ENCODE measurements at regions of chr10 and their contacts with region 1.

Region 1: GRCh38 chr10:70758757-70759514 is 26.2 kb downstream of the TBATA start:
- DNase-seq: peak; percentile 52
- ATAC-seq: peak; percentile 49
- H3K4me3 ChIP-seq: no peak overlapping the region
- H3K27ac ChIP-seq: no peak overlapping the region
- H3K4me1 ChIP-seq: peaks cover 6% of the 10 kb centered on the region; the same call in 1 of the 2 replicates
- H3K27me3 ChIP-seq: no peaks in the 10 kb centered on the region
- CTCF ChIP-seq: peak; percentile 81
- EP300 ChIP-seq: no peak
- POLR2A ChIP-seq: no peak
- RAD21 ChIP-seq: peak; percentile 50; the same call in 1 of the 2 replicates

Region 2: DNA sequence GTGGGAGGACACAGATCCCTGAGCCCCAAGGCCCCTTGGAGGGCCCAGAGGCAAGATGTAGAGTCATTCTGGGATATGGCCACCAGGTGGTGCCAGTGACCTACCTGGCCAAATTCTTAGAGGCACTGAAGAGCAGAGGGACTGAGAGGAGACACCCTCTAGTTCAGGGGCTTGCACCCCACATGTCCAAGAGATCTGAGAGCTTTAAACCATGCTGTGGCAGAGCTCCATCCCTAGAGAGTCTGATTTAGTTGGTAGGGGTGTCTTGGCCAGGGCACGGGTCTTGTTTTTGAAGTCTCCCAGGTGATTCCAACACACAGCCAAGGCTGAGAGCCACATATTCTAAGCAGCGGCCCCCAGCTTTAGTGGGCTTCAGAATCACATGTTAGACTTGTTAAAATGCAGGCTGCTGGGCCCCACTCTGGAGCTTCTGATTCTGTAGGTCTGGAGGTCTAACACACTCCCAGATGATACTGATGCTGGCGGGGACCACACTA is 208.9 kb before region 1 on chr10:
- CTCF ChIA-PET with region 1: interaction called, 27 read pairs
- POLR2A ChIA-PET with region 1: no interaction called
- in situ Hi-C with region 1: loop called (anchors 5 kb)
- intact Hi-C with region 1: loop called (anchors 1 kb)
- DNase-seq: peak; percentile 44
- ATAC-seq: peak; percentile 82
- H3K4me3 ChIP-seq: no peak overlapping the region
- H3K27ac ChIP-seq: no peak overlapping the region
- H3K4me1 ChIP-seq: peaks cover 21% of the 10 kb centered on the region
- H3K27me3 ChIP-seq: peaks cover 1 to 4% of the 10 kb centered on the region in 2 experiments; a peak in 2 of 5 replicates
- CTCF ChIP-seq: peak; percentile 93
- EP300 ChIP-seq: no peak
- POLR2A ChIP-seq: no peak
- RAD21 ChIP-seq: peak; percentile 84

Region 3: GRCh38 chr10:70558871-70559810 is 199.8 kb before region 1 on chr10:
- CTCF ChIA-PET with region 1: interaction called, 26 read pairs
- POLR2A ChIA-PET with region 1: no interaction called
- in situ Hi-C with region 1: no loop called
- intact Hi-C with region 1: loop called (anchors 1 kb)
- DNase-seq: peak; percentile 48
- ATAC-seq: peak; percentile 87
- H3K4me3 ChIP-seq: peak overlapping the region in 2 of 3 experiments; percentile 15 to 57; a peak in 1 of 6 replicates
- H3K27ac ChIP-seq: no peak overlapping the region
- H3K4me1 ChIP-seq: peaks cover 11% of the 10 kb centered on the region; the same call in 1 of the 2 replicates
- H3K27me3 ChIP-seq: peaks cover 2% of the 10 kb centered on the region in 2 experiments; a peak in 2 of 5 replicates
- CTCF ChIP-seq: peak; percentile 76
- EP300 ChIP-seq: no peak
- POLR2A ChIP-seq: no peak
- RAD21 ChIP-seq: peak; percentile 50; the same call in 1 of the 2 replicates

Region 4: DNA sequence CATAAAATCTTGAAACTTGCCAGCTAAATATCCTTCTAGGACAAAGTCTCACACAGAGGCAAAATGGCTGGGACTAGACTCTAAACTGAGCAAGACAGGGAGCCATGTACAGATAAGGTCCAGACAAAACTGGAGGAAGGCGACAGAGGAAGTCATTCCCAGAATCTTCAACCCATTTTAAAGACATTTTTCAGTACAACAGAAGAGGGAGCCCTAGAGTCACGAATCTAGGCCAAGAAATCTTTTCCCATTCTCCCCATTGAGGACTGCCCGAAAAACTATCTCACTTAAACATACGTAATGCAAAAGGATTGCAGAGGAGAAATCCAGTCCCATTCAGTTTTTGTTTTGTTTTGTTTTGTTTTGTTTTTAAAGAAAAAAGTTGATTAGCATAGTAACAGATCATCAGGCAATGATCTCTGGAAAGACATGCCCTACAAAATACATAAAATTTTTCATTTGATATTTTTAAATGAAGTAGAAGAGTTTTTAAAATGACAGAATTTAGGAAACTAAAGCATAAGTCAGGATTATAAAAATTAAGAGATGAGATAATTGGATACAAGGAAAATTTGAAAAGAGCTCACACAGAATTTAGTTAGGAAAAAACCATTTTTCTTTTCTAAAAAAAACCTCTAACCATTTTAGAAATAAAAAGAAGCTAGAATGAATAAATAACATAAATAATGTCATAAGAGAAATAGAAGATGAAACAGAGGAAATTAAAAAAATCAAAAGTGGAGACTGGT is 139.5 kb before region 1 on chr10:
- CTCF ChIA-PET with region 1: interaction called, 5 read pairs
- POLR2A ChIA-PET with region 1: no interaction called
- in situ Hi-C with region 1: no loop called
- intact Hi-C with region 1: loop called (anchors 2 kb)
- DNase-seq: no peak
- ATAC-seq: no peak
- H3K4me3 ChIP-seq: no peak overlapping the region
- H3K27ac ChIP-seq: no peak overlapping the region
- H3K4me1 ChIP-seq: no peaks in the 10 kb centered on the region
- H3K27me3 ChIP-seq: peaks cover 0 to 3% of the 10 kb centered on the region in 2 experiments; a peak in 1 of 5 replicates
- CTCF ChIP-seq: no peak
- EP300 ChIP-seq: no peak
- POLR2A ChIP-seq: no peak
- RAD21 ChIP-seq: no peak

Region 5: DNA sequence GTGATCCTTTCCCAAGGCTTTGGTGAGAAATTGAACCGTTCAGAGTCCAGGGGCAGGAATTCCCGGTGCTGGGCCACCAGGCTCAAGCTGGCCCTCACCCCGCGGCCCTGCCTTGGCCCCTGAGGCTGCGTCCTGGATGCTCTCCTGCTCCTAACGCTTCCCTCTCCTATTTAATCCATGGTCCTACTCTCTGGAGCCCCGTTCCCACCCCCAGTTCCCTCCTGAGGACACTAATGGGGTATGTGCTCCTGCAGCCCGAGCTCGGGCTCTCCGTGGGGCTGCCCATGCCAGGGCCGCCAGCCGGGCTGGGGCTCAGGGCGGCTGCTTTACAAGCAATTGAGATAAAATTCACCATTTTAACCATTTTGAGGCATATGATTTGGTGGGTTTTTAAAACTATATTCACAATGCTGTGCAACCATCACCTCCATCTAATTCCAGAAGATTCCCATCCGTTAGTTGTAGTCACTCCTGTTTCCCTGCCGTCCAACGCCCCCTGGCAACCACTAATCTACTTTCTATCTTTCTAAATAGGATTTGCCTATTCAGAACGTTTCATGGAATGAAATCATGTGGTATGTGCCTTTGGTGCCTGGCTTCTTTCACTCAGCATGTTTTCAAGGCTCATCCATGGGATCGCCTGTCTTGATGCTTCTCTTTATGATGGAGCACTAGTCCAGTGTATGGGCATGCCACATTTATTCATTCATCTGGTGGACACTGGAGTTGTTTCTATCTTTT is 53.6 kb before region 1 on chr10:
- CTCF ChIA-PET with region 1: no interaction called
- POLR2A ChIA-PET with region 1: no interaction called
- in situ Hi-C with region 1: no loop called
- intact Hi-C with region 1: no loop called
- DNase-seq: no peak
- ATAC-seq: no peak
- H3K4me3 ChIP-seq: no peak overlapping the region
- H3K27ac ChIP-seq: no peak overlapping the region
- H3K4me1 ChIP-seq: no peaks in the 10 kb centered on the region
- H3K27me3 ChIP-seq: no peaks in the 10 kb centered on the region
- CTCF ChIP-seq: no peak
- EP300 ChIP-seq: no peak
- POLR2A ChIP-seq: no peak
- RAD21 ChIP-seq: no peak

Region 6: DNA sequence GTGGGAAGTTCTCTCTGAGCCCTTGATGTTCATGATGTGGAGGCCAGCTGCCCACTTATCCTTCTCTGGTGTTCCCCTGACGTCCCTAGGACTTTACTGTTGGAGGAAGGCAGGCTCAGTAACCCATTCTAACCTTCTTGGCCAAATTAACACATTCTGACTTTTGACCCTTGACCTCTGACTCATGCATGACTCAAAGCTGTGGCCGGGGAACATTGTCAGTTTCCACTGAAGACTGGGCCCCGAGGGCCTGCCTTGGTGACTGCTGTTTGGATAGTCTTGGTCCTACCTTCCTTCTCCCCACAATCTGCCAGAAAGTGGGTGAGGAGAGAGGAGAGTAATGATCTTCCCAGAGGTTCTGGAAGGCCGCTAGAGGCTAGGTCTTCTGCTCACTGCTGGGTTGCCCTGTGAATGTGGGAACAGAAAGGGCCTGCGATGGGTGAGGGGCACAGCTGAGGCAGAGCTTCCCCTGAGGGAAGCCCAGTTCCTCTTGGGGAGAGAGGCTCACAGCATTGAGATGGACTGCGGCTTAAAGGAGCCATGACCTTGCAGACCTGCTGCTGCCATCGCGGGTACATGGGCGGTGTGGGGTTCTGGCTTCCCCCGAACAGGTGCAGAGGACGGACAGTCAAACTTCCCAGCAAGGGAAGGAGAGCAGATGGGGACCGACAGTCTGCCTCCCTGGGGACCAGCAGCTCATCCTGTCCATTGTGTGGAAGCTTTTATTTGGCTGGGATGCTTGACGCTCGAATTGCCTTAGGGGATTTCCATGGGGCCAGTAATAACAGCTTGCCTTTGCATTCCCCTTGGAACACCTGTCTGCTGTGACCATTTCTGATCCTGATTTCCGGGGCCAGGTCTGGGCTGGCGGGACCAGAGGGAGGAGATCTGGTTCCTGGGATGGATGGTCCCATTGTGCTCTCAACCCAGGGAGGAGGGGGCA is 42.8 kb before region 1 on chr10:
- CTCF ChIA-PET with region 1: no interaction called
- POLR2A ChIA-PET with region 1: no interaction called
- in situ Hi-C with region 1: no loop called
- intact Hi-C with region 1: no loop called
- DNase-seq: peak; percentile 19
- ATAC-seq: peak; percentile 19; the same call in 2 of the 3 replicates
- H3K4me3 ChIP-seq: no peak overlapping the region
- H3K27ac ChIP-seq: no peak overlapping the region
- H3K4me1 ChIP-seq: peaks cover 7% of the 10 kb centered on the region
- H3K27me3 ChIP-seq: no peaks in the 10 kb centered on the region; a peak in 1 of 5 replicates
- CTCF ChIP-seq: no peak
- EP300 ChIP-seq: no peak
- POLR2A ChIP-seq: no peak
- RAD21 ChIP-seq: no peak

Region 7: GRCh38 chr10:70771311-70772099 is 12.6 kb after region 1 on chr10:
- CTCF ChIA-PET with region 1: no interaction called
- POLR2A ChIA-PET with region 1: no interaction called
- in situ Hi-C with region 1: no loop called
- intact Hi-C with region 1: no loop called
- DNase-seq: no peak
- ATAC-seq: no peak
- H3K4me3 ChIP-seq: no peak overlapping the region
- H3K27ac ChIP-seq: no peak overlapping the region
- H3K4me1 ChIP-seq: no peaks in the 10 kb centered on the region; the same call in 1 of the 2 replicates
- H3K27me3 ChIP-seq: peaks cover 1 to 41% of the 10 kb centered on the region in 2 experiments; a peak in 4 of 5 replicates
- CTCF ChIP-seq: no peak
- EP300 ChIP-seq: no peak
- POLR2A ChIP-seq: no peak
- RAD21 ChIP-seq: no peak

Region 8: GRCh38 chr10:70880077-70880534 is 121.2 kb after region 1 on chr10:
- CTCF ChIA-PET with region 1: no interaction called
- POLR2A ChIA-PET with region 1: no interaction called
- in situ Hi-C with region 1: no loop called
- intact Hi-C with region 1: loop called (anchors 5 kb)
- DNase-seq: peak; percentile 77
- ATAC-seq: peak; percentile 91
- H3K4me3 ChIP-seq: no peak overlapping the region
- H3K27ac ChIP-seq: no peak overlapping the region
- H3K4me1 ChIP-seq: no peaks in the 10 kb centered on the region
- H3K27me3 ChIP-seq: no peaks in the 10 kb centered on the region
- CTCF ChIP-seq: peak; percentile 92
- EP300 ChIP-seq: no peak
- POLR2A ChIP-seq: no peak
- RAD21 ChIP-seq: peak; percentile 85